ENCODE measurements at regions of chr18 and their contacts with region 1.

Region 1: GRCh38 chr18:26383454-26384270 is 157.4 kb downstream of the TAF4B start:
- DNase-seq: no peak
- ATAC-seq: peak; percentile 44 to 54
- H3K4me3 ChIP-seq: no peak overlapping the region
- H3K27ac ChIP-seq: no peak overlapping the region
- H3K4me1 ChIP-seq: peaks cover 2% of the 10 kb centered on the region
- H3K27me3 ChIP-seq: no peaks in the 10 kb centered on the region

Region 2: GRCh38 chr18:26656944-26657536 is 273.4 kb after region 1 on chr18:
- intact Hi-C with region 1: loop called in 1 of 4 experiments (anchors 10 kb)
- DNase-seq: peak; percentile 90 to 95 (median 94)
- ATAC-seq: peak; percentile 96 to 97
- H3K4me3 ChIP-seq: peak overlapping the region; percentile 99
- H3K27ac ChIP-seq: peak overlapping the region; percentile 97
- H3K4me1 ChIP-seq: no peaks in the 10 kb centered on the region
- H3K27me3 ChIP-seq: no peaks in the 10 kb centered on the region